Panc1 (cell line): ENCODE measurements at regions of chr22 and their contacts with region 1.

Region 1: GRCh38 chr22:17742527-17742902 is 31.8 kb downstream of the BID start:
- DNase-seq: peak; percentile 27
- ATAC-seq: peak; percentile 80
- H3K4me3 ChIP-seq: no peak overlapping the region
- H3K27ac ChIP-seq: peak overlapping the region; percentile 70; the same call in 1 of the 2 replicates
- H3K4me1 ChIP-seq: peaks cover 32% of the 10 kb centered on the region
- H3K27me3 ChIP-seq: no peaks in the 10 kb centered on the region
- CTCF ChIP-seq: peak; percentile 81

Region 2: GRCh38 chr22:17508110-17508509 is 234.4 kb before region 1 on chr22:
- CTCF ChIA-PET with region 1: no interaction called
- POLR2A ChIA-PET with region 1: no interaction called
- in situ Hi-C with region 1: no loop called
- intact Hi-C with region 1: no loop called
- DNase-seq: no peak
- ATAC-seq: no peak
- H3K4me3 ChIP-seq: no peak overlapping the region
- H3K27ac ChIP-seq: no peak overlapping the region
- H3K4me1 ChIP-seq: no peaks in the 10 kb centered on the region
- H3K27me3 ChIP-seq: no peaks in the 10 kb centered on the region
- CTCF ChIP-seq: no peak

Region 3: DNA sequence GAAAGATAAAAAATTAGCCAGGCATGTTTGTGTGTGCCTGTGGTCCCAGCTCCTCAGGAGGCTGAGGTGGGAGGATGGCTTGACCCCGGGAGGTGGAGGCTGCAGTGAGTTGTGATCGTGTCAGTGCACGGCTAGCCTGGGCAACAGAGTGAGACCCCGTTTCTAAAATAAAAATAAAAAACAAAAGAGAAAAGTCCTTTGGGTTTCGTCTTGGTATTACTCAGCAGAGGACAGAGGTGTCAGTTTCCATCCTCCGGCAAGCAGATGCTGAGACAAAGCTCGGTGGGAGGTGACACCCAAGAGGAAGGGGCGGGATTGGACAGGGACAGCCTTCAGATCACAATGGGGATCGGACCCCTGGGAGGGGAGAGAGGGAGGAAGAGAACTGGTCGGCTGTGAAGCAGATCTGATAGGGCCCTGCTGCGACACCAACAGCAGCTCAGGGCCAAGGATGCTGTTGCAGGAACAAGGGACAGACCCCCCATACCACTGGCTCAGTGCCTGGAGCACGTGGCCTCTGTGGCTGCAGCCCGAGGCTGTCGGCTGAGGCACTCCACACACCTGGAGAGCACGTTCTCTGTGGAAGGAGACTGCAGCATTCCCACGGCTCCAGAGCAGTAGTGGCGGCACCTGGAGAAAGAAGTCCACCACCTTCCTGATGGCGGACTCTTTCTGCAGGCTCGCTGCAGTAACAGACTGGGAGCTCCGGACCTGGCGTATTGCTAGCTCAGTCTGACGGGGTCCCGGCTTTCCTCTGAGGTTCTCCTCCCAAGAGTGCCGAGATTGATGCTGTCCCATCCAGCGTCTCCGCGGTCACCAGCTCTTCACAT is 37.0 kb after region 1 on chr22:
- CTCF ChIA-PET with region 1: interaction called, 15 read pairs
- POLR2A ChIA-PET with region 1: interaction called, 11 read pairs
- in situ Hi-C with region 1: no loop called
- intact Hi-C with region 1: loop called (anchors 5 kb)
- DNase-seq: no peak
- ATAC-seq: no peak
- H3K4me3 ChIP-seq: no peak overlapping the region
- H3K27ac ChIP-seq: no peak overlapping the region
- H3K4me1 ChIP-seq: peaks cover 28% of the 10 kb centered on the region
- H3K27me3 ChIP-seq: no peaks in the 10 kb centered on the region
- CTCF ChIP-seq: no peak

Region 4: DNA sequence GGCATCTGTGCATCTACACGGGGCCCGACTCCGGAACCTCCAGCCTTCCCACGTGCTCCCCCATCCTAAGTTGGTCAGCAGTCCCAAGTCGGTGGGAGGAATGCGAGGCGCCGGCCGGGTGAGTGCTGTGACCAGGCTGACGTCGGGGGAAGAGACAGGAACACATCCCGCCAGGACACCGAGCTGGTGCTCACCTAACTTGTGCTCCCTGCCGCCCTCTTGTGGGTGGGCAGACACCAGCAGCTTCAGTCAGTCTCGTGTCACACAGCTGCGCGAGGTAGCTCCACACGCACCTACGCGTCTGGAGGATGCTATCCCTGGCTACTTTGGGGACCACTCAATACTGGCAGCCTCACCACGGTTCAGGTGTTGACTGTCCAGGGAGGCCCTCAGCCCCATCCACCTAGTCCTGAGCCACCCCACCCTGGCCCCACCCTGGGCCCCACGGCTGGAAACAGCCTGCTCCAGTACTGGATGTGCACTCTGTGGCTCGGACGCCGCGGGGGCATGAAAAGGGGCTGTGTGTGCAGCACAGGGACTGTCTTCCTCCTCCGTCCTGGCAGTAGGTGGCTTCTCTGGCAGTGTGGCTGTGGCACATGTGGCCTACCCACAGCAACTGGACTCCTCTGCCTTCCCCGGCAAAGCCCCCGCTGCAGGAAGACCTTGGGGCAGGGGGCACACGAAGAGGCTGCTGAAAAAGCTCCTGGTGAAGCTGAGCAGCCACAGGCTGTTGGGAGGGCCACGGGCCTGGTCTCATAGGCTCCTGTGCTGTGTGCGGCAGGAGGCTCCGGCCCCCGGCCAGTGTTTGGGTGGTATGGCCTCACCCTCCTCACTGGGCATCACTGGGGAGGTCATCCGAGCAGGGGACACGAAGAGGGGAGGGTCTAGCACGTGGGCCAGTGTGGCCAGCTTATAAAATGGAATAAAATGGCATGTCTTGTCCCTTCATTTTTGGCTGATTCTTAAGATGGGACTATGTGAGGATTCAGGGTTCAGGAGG is 43.0 kb after region 1 on chr22:
- CTCF ChIA-PET with region 1: interaction called, 15 read pairs
- POLR2A ChIA-PET with region 1: no interaction called
- in situ Hi-C with region 1: no loop called
- intact Hi-C with region 1: loop called (anchors 5 kb)
- DNase-seq: peak; percentile 47
- ATAC-seq: peak; percentile 68
- H3K4me3 ChIP-seq: no peak overlapping the region
- H3K27ac ChIP-seq: no peak overlapping the region
- H3K4me1 ChIP-seq: peaks cover 12% of the 10 kb centered on the region
- H3K27me3 ChIP-seq: no peaks in the 10 kb centered on the region
- CTCF ChIP-seq: peak; percentile 81